ENCODE measurements at regions of chr19 and their contacts with region 1.

Region 1: DNA sequence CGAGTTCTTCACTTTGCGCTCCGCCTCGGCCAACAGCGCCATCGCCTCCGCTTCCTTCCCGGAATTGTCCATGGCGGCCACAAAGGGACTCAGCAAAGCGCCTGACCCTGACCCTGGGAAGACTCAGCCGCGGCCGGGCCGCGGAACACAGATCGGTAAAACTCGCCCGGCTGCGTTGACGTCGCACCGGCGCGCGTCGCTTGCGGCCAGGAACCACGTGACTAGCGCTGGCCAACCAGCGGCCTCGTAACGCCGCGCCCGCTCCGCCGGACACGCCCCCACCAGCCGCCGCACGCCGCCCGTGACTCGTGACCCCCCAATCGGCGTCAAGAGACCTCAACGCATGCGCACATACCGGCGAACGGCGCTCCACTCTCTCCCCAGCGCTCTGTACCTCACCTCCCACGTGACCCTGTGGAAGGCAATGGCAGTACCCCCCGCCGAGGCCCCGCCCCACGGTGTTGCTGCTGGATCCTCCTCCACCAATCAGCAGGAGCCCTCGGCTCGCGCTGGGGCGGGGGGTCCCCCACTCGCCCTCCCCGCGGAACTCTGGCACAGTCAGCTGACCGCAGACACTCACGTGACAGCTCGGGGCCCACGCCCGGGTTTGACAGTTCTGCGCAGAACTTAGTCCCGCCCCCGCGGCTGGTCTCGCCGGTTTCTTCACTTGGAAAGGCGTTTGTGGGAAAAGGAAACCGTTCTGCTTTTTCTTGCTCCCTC is at the start of gene NAPA:
- DNase-seq: peak; percentile 100
- ATAC-seq: peak; percentile 97 to 98
- total RNA-seq, gene NAPA: 92.7 to 113 TPM

Region 2: DNA sequence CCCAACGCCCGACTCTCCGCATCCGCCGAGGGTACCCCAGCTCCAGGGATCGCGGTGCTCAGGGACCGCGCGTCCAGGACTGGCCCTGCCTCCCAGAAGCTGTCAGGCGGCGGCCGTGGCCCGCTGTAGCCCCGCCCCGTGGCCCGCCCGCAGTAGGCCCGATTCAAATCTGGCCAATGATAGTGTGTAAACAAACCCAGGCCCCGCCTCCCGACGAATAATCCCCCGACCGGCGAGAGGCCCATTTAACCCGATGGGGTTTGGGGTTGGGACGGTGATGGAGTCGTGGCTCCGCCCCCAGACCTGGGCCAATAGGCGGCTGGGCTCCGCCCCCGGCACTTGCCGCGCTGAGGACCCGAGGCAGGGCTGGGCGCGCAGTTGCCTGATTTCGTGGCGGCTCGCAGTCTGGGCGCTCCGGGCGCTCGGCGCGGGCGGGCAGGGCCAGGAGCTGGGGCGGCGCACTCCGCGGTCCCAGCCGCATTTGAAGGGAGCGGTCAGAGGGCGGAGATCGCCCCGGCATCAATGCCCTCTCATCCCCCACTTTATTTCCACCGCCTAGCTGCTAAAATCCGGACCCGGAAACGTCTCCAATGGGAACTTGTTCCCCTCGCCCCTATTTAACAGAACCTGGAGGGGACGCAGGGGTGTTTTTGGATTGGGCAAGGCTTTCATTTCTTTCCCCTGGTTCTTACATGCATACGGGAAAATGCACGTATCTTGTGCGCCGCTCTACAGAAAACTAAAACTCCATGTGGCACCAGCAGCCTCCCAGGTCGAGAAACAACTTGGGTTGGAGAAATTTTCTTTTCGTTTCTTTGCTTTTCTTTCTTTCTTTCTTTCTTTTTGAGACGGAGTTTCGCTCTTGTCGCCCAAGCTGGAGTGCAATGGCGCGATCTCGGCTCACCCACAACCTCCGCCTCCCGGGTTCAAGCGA is 85.5 kb after region 1 on chr19:
- intact Hi-C with region 1: loop called in 1 of 2 experiments (anchors 1 kb)
- DNase-seq: peak; percentile 100
- ATAC-seq: peak; percentile 98 to 99

Region 3: GRCh38 chr19:47608074-47608918 is 93.3 kb after region 1 on chr19:
- intact Hi-C with region 1: loop called in 1 of 2 experiments (anchors 2 kb)
- DNase-seq: peak; percentile 93
- ATAC-seq: peak; percentile 94 to 96